Right ventricle myocardium superior (tissue), 1 donor: ENCODE measurements at regions of chr12 and their contacts with region 1.

Region 1: DNA sequence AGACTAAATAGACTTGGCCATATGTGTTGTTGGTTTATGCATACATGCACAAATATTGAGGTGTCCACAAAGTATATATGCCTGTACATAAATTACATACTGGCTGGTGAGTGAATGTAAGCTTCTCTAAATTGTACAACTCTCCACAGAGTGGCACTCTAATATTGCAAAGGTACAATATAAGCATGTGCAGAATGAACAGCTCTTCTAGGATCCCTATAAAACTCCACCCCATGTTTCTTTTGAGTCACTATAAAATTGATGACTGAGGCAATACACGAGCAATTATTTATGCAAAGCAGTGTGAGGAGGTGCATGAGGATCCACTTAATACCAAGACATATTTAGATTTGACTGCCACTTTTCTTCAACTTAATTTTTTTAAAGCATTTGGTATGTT is 172.2 kb downstream of the NAV3 start:
- DNase-seq: no peak
- ATAC-seq: no peak

Region 2: DNA sequence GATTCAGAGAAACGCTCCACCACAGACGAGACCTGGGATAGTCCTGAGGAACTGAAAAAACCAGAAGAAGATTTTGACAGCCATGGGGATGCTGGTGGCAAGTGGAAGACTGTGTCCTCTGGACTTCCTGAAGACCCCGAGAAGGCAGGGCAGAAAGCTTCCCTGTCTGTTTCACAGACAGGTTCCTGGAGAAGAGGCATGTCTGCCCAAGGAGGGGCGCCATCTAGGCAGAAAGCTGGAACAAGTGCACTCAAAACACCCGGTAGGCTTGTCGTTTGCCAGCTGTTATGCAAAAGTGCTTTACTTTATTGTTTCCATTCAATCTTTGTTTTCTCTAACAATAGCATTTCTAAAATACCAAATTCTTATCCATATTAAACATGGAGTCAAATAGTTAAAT is 115.2 kb after region 1 on chr12:
- intact Hi-C with region 1: loop called (anchors 10 kb)
- DNase-seq: no peak
- ATAC-seq: no peak